ENCODE measurements at regions of chr1 and their contacts with region 1.

Region 1: GRCh38 chr1:209207701-209208286 is 375.7 kb upstream of the CAMK1G start:
- DNase-seq: peak; percentile 4
- H3K4me3 ChIP-seq: peak overlapping the region; percentile 48
- CTCF ChIP-seq: peak; percentile 95

Region 2: DNA sequence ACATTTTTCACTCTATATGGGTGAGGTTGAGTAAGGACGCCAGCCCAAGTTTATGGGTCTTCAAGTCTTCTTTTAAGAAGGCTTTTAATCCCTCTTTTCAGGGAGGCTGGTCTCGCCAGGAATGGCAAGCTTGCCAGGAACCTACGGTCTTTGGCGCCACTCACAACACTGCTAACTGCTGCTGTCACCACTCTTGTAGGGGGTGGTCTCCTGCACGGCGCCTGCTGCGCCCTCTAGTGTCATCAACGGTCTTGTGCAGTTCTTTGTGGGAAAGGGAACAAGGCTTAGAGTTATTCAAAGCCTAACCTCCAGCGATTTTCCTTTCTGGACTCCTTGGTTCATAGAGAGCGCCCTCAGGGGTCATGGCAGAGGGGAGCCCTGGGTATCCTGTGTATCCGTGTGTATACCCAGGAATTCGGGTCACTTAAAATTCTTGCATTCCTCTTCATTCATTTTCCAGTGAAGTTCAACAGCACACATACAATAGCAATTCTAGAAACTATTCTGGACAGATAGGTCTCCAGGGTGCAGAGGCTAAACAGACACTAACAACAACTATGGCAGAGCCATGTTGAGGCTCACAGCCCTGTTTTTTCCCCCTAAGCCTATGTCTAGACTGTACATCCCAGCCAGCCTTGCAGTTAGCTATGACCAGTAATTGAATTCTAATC is 17.1 kb before region 1 on chr1:
- CTCF ChIA-PET with region 1: interaction called, 58 read pairs
- POLR2A ChIA-PET with region 1: no interaction called
- DNase-seq: no peak
- H3K4me3 ChIP-seq: no peak overlapping the region
- CTCF ChIP-seq: peak; percentile 80

Region 3: GRCh38 chr1:209435654-209436566 is 228.1 kb after region 1 on chr1:
- CTCF ChIA-PET with region 1: interaction called, 68 read pairs
- POLR2A ChIA-PET with region 1: no interaction called
- DNase-seq: no peak
- H3K4me3 ChIP-seq: no peak overlapping the region
- CTCF ChIP-seq: peak; percentile 95

Region 4: DNA sequence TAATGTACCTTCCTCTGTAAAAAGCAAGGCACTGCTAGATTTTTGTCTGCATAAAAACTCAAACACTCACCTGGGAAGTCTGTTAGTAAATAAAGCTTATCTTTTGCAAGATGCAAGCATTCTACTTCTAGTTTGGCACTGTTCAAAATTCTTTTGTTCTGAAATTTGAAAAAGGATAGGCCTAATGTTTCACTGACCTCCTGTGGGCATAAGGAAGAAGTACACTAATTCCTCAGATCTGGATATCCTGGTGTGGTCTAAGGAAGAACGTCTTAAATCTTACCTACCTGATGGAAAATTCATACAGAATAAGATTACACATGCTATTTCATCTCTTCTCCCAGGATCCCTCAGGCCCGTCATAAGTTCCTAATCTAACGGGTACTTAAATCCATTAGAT is 282.2 kb after region 1 on chr1:
- CTCF ChIA-PET with region 1: interaction called, 164 read pairs
- POLR2A ChIA-PET with region 1: no interaction called
- DNase-seq: no peak
- H3K4me3 ChIP-seq: no peak overlapping the region
- CTCF ChIP-seq: peak; percentile 44

Region 5: DNA sequence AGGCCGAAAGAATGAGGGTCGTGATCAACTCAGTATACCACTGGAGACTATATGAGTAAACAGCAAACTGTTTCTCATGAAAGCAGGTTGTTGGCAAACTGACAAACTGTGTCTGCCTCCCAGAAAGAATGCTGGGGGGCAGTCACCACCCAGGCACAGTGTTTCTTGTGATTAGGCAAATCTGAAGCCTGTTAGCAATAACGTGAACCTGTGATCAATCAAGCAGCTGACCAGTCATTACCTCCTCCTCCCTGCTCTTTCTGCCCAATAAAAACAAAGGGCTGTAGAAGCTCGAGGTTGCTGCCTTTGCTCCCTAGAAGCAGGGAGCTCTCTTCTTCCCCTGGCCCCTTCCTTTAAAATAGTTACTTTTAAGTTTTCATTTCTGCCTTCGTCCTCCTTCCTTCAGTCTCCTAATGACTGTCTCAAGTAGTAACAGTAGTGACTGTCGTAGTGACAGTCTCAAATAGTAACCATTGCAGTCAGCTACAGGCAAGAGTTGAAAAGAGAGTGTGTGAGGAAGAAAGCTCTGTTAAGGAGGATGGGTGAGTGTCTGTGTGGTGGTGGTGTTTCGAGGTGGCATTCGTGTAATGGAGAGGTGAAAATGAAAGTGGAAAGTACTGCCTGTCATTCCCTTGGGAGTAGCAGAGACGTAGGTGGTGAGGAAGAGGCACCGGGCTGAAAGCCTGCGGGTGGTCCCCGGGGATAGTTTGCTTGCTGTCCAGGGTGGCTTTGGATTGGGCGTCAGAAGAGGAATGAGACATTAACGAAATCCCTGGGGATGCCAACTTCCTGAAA is 1135.4 kb after region 1 on chr1:
- CTCF ChIA-PET with region 1: no interaction called
- POLR2A ChIA-PET with region 1: no interaction called
- DNase-seq: no peak
- H3K4me3 ChIP-seq: peak overlapping the region; percentile 34
- CTCF ChIP-seq: no peak

Measured in AG04449 (cell line).